Gastrocnemius medialis (tissue), 4 donors: ENCODE measurements at regions of chr12 and their contacts with region 1.

Region 1: DNA sequence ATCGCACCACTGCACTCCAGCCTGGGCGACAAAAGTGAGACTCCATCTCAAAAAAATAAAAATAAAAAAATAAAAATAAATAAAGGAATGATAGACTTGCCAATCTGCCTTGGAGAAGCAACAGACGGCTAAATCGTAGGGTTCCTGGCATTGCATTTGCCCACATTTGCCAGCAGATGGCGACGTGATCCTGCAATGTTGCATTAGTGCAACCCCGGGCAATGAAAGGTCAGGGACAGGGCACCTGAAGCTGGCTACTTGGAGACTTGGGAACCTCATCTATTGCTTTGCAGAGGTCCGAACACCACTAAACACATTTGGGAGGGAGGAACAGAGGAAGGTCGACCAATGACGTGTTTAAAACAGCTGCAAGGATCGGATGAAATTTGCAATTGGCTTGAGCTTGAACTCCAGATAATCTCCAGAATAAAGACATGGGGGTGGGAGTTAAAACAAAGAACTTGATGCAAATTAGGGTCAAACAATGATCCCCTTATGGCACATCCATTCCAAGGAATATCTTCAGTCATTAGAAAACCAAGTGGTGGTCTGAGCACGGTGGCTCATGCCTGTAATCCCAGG is 34.6 kb downstream of the SPRING1 start:
- DNase-seq: peak; percentile 40 to 60
- ATAC-seq: peak; percentile 58 to 85
- H3K4me3 ChIP-seq: no peak overlapping the region
- H3K27ac ChIP-seq: no peak overlapping the region
- H3K4me1 ChIP-seq: peaks cover 5% of the 10 kb centered on the region in 2 donors
- H3K27me3 ChIP-seq: no peaks in the 10 kb centered on the region
- CTCF ChIP-seq: peak; percentile 78 to 95 (median 88)
- POLR2A ChIP-seq: no peak

Region 2: GRCh38 chr12:115998119-115998633 is 705.1 kb before region 1 on chr12:
- in situ Hi-C with region 1: loop called (anchors 10 to 25 kb)
- intact Hi-C with region 1: loop called (anchors 5 kb)
- DNase-seq: no peak
- ATAC-seq: peak; percentile 51 to 62
- H3K4me3 ChIP-seq: no peak overlapping the region
- H3K27ac ChIP-seq: peak overlapping the region; percentile 37 to 51 (median 44)
- H3K4me1 ChIP-seq: peaks cover 24 to 25% of the 10 kb centered on the region in 2 donors
- H3K27me3 ChIP-seq: no peaks in the 10 kb centered on the region
- CTCF ChIP-seq: peak; percentile 70 to 85 (median 78)
- POLR2A ChIP-seq: no peak

Region 3: GRCh38 chr12:116880817-116881324 is 177.6 kb after region 1 on chr12:
- in situ Hi-C with region 1: no loop called
- intact Hi-C with region 1: loop called (anchors 5 kb)
- DNase-seq: no peak
- ATAC-seq: peak in 1 of 2 donors; percentile 65
- H3K4me3 ChIP-seq: peak overlapping the region; percentile 38 to 48 (median 42)
- H3K27ac ChIP-seq: no peak overlapping the region
- H3K4me1 ChIP-seq: peaks cover 14 to 36% of the 10 kb centered on the region in 2 donors
- H3K27me3 ChIP-seq: peaks cover 44 to 61% (median 61%) of the 10 kb centered on the region in 3 donors
- CTCF ChIP-seq: no peak
- POLR2A ChIP-seq: no peak

Region 4: GRCh38 chr12:116955382-116956021 is 252.2 kb after region 1 on chr12:
- in situ Hi-C with region 1: loop called in 3 of 4 experiments (anchors 10 to 25 kb)
- intact Hi-C with region 1: loop called (anchors 1 kb)
- DNase-seq: peak in 1 of 2 donors; percentile 33
- ATAC-seq: peak; percentile 84 to 96
- H3K4me3 ChIP-seq: no peak overlapping the region
- H3K27ac ChIP-seq: no peak overlapping the region
- H3K4me1 ChIP-seq: peaks cover 6 to 25% of the 10 kb centered on the region in 2 donors
- H3K27me3 ChIP-seq: no peaks in the 10 kb centered on the region
- CTCF ChIP-seq: peak in 2 of 5 experiments; percentile 8 to 32
- POLR2A ChIP-seq: no peak

Region 5: DNA sequence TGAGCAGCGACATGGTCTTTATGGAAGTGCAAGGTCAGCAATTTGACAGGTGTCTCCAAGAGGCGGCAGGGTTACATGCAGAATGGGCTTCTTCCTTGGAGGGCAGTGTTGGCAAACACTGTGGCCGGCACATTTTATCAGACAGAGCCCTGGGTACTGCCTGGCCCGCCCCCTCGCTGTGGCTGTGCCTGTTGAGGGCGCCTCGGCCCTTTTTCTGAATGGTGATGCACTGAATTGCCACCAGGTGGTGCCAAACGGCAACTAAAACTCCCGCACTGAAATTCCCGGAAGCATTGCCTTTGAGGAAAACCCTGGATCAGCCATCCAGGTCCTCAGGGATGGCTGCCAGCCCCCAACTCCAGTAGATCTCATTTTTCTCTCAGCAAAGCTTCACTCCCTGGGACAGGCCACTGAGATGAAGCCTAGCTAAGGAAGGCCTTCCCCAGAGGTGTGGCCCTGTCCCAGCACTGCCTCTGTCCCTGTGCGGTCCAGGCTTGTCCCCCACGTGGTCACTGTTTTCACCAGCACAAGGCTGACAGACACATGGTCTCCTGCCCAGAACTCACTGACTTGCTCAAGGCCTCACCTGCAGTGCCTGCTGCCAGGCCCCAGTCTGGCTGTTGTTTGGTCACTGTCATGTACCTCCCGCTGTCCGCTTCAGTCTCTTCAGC is 322.3 kb after region 1 on chr12:
- in situ Hi-C with region 1: no loop called
- intact Hi-C with region 1: loop called (anchors 10 kb)
- DNase-seq: peak in 1 of 2 donors; percentile 31
- ATAC-seq: peak in 1 of 2 donors; percentile 77
- H3K4me3 ChIP-seq: no peak overlapping the region
- H3K27ac ChIP-seq: peak overlapping the region in 1 of 4 donors; percentile 25
- H3K4me1 ChIP-seq: peaks cover 0 to 4% of the 10 kb centered on the region in 2 donors
- H3K27me3 ChIP-seq: no peaks in the 10 kb centered on the region
- CTCF ChIP-seq: peak; percentile 72 to 85 (median 83)
- POLR2A ChIP-seq: no peak

Region 6: GRCh38 chr12:117119592-117120198 is 416.4 kb after region 1 on chr12:
- in situ Hi-C with region 1: no loop called
- intact Hi-C with region 1: loop called (anchors 10 kb)
- DNase-seq: peak in 1 of 2 donors; percentile 25
- ATAC-seq: no peak
- H3K4me3 ChIP-seq: no peak overlapping the region
- H3K27ac ChIP-seq: peak overlapping the region in 1 of 4 donors; percentile 2
- H3K4me1 ChIP-seq: peaks cover 8 to 15% of the 10 kb centered on the region in 2 donors
- H3K27me3 ChIP-seq: no peaks in the 10 kb centered on the region
- CTCF ChIP-seq: peak in 4 of 5 experiments; percentile 33 to 59 (median 50)
- POLR2A ChIP-seq: no peak

Region 7: GRCh38 chr12:117155278-117156060 is 452.2 kb after region 1 on chr12:
- in situ Hi-C with region 1: loop called in 1 of 4 experiments (anchors 25 kb)
- intact Hi-C with region 1: no loop called
- DNase-seq: peak in 1 of 2 donors; percentile 27
- ATAC-seq: no peak
- H3K4me3 ChIP-seq: no peak overlapping the region
- H3K27ac ChIP-seq: no peak overlapping the region
- H3K4me1 ChIP-seq: no peaks in the 10 kb centered on the region
- H3K27me3 ChIP-seq: no peaks in the 10 kb centered on the region
- CTCF ChIP-seq: peak in 4 of 5 experiments; percentile 42 to 76 (median 52)
- POLR2A ChIP-seq: no peak